AG04449 (cell line): ENCODE measurements at regions of chr22 and their contacts with region 1.

Region 1: DNA sequence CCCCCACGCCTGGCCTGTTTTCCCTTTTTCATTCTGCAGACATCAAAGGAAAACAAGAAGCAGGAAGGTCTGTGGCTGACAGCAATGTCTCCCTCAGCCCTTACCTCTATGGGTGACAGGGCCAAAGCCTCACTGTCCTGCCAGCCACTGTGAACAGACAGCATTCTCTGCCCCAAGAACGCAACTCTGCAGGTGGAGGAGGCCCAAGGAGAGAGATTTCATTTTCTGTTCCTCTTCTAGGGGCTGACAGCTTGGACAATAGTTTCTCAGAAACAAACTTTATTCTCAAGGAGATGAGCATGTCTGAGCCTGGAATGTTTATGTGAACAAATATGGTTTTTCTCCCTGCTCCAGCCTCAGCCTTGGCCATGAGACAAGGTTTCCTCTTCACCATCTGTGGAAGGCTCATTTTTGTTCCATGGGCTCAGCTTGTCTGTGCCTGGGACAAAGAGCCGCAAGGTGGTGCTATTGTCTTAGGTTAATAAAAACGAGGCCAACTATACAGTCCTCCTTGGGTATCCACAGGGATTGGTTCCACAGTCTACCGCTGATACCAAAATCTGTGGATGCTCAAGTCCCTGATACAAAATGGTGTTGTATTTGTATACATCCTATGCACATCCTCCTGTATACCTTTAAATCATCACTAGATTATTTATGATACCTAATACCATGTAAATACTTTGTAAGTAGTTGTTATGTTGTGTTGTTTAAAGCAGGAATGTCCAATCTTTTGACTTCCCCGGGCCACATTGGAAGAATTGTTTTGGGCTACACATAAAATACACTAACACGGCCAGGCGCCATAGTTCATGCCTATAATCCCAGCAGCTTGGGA is 5.8 kb downstream of the PIWIL3 start:
- DNase-seq: peak; percentile 0
- H3K4me3 ChIP-seq: no peak overlapping the region
- CTCF ChIP-seq: peak; percentile 55

Region 2: DNA sequence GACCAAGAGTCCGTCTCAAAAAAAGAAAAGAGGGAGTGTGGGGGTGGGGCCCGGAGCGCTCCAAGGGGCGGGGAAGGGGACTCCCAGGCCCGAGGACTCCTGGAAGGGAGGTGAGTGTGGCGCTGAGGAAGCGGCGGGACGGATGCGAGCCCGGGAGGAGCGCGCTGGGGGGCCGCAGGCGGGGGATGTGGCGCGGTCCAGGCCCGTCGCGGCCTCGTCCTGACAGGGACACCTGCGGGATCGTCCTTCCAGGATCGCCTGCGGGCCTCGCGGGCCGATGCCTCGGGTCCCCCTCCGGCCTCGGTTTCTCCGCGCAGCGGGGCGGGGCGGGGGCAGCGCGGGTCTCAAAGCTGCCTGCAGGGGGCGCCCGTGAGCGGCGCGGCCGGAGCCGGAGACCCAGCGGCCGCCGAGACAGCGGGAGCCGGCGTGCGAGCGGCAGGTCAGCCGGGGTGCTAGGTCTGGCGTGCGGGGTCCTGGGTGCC is 345.2 kb before region 1 on chr22:
- CTCF ChIA-PET with region 1: no interaction called
- POLR2A ChIA-PET with region 1: no interaction called
- DNase-seq: no peak
- H3K4me3 ChIP-seq: peak overlapping the region; percentile 57
- CTCF ChIP-seq: peak; percentile 80

Region 3: GRCh38 chr22:24758164-24758799 is 10.5 kb before region 1 on chr22:
- CTCF ChIA-PET with region 1: interaction called, 74 read pairs
- POLR2A ChIA-PET with region 1: no interaction called
- DNase-seq: no peak
- H3K4me3 ChIP-seq: no peak overlapping the region
- CTCF ChIP-seq: peak; percentile 28

Region 4: GRCh38 chr22:24789516-24789915 is 20.8 kb after region 1 on chr22:
- CTCF ChIA-PET with region 1: no interaction called
- POLR2A ChIA-PET with region 1: no interaction called
- DNase-seq: no peak
- H3K4me3 ChIP-seq: no peak overlapping the region
- CTCF ChIP-seq: no peak

Region 5: GRCh38 chr22:24848559-24849168 is 79.9 kb after region 1 on chr22:
- CTCF ChIA-PET with region 1: interaction called, 28 read pairs
- POLR2A ChIA-PET with region 1: no interaction called
- DNase-seq: no peak
- H3K4me3 ChIP-seq: no peak overlapping the region
- CTCF ChIP-seq: no peak

Region 6: GRCh38 chr22:25048659-25049647 is 280.2 kb after region 1 on chr22:
- CTCF ChIA-PET with region 1: interaction called, 32 read pairs
- POLR2A ChIA-PET with region 1: no interaction called
- DNase-seq: no peak
- H3K4me3 ChIP-seq: no peak overlapping the region
- CTCF ChIP-seq: peak; percentile 74